ENCODE measurements at regions of chr2 and their contacts with region 1.

Region 1: DNA sequence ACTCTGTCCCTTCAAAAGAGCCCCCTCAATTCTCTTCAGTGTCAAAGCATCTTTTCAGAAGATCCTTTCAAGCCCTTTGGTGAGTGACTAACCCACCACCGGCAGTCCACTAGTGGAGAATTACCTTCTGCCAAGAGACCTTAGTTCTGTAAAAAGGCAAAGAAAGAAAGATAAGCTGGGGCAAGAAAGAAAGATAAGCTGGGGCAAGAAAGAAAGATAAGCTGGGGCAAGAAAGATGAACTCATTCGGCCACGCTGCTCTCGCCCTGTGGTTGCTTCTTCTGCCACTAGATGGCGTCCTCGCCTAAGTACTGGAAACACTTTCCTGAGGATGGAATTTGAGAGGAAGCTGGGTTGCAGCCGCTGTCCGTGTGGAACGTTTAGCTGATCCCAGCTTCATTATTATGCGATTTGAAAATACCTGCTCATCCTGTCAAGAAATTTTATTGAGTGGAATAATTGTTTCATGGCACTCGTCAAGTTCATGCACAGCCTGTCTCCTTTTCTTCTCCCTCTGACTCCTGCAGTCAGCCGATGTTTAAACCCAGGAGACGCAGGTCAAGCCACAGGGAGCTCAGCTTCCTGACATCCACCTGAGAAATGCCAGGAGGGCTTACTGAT is 17.3 kb upstream of the ANXA4 start:
- DNase-seq: peak; percentile 50 to 97
- H3K4me3 ChIP-seq: peak overlapping the region in 2 of 4 experiments; percentile 4 to 49; a peak in 3 of 8 replicates
- H3K27ac ChIP-seq: no peak overlapping the region
- H3K4me1 ChIP-seq: peaks cover 0 to 2% (median 0%) of the 10 kb centered on the region in 4 experiments; a peak in 1 of 7 replicates
- H3K27me3 ChIP-seq: no peaks in the 10 kb centered on the region
- CTCF ChIP-seq: peak; percentile 90 to 95 (median 91)
- EP300 ChIP-seq: no peak
- POLR2A ChIP-seq: no peak
- RAD21 ChIP-seq: peak; percentile 95 to 98

Region 2: GRCh38 chr2:69422198-69422597 is 302.5 kb before region 1 on chr2:
- CTCF ChIA-PET with region 1: no interaction called
- POLR2A ChIA-PET with region 1: no interaction called
- DNase-seq: no peak
- H3K4me3 ChIP-seq: no peak overlapping the region
- H3K27ac ChIP-seq: no peak overlapping the region
- H3K4me1 ChIP-seq: no peaks in the 10 kb centered on the region
- H3K27me3 ChIP-seq: no peaks in the 10 kb centered on the region
- CTCF ChIP-seq: no peak
- EP300 ChIP-seq: no peak
- POLR2A ChIP-seq: no peak
- RAD21 ChIP-seq: no peak

Region 3: GRCh38 chr2:69694894-69695849 is 29.5 kb before region 1 on chr2:
- CTCF ChIA-PET with region 1: interaction called, 15 read pairs
- POLR2A ChIA-PET with region 1: no interaction called
- DNase-seq: no peak
- H3K4me3 ChIP-seq: no peak overlapping the region
- H3K27ac ChIP-seq: no peak overlapping the region
- H3K4me1 ChIP-seq: peaks cover 0 to 3% (median 0%) of the 10 kb centered on the region in 4 experiments; a peak in 1 of 7 replicates
- H3K27me3 ChIP-seq: no peaks in the 10 kb centered on the region
- CTCF ChIP-seq: no peak
- EP300 ChIP-seq: no peak
- POLR2A ChIP-seq: no peak
- RAD21 ChIP-seq: no peak

Region 4: DNA sequence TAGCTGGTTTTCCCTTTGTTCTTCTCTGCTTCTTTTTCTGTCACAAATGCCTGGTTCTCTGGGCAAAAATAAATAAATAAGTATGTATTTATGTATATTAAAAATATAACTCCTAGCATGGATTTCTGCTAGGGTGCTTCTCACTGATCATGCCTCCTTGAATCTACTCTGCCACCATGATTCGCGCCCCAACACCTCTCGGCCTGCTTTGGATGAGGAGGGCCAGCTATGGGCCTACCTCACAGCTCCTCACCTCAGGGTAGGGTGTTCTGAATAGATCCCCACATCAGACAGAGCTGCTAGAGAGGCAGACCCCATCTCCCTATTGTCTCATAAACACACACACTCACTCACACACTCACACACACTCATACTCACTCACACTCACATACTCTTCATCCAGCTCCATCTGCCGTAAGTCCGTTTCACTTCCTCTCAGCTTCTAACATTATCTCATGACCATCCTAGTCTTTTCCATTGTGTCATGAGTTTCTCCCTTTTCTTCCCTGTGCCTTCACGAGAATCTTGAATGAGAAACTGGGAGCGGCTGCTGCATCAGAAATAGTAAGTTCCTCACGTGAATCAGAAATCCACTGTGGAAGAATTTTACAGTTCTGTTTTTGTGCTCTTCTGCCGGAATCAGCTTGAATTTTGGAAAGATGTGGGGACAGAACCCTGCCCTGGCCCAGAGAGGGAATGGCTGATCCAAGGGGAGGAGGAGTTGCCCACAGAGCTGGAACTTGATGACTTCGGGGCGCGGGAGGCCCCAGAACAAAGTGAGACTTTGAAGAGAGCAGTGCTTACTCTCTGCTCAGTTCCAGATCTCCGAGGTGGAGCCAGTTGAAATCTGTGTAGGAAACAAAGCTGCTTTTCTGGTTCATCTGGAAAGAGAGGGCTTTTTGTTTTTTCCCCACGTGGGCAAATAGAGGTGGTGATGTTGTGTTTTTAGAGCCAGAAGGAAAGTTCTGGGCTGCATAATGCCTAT is 38.2 kb after region 1 on chr2:
- CTCF ChIA-PET with region 1: interaction called, 11 read pairs
- POLR2A ChIA-PET with region 1: no interaction called
- DNase-seq: no peak
- H3K4me3 ChIP-seq: no peak overlapping the region
- H3K27ac ChIP-seq: no peak overlapping the region
- H3K4me1 ChIP-seq: no peaks in the 10 kb centered on the region
- H3K27me3 ChIP-seq: no peaks in the 10 kb centered on the region
- CTCF ChIP-seq: no peak
- EP300 ChIP-seq: no peak
- POLR2A ChIP-seq: no peak
- RAD21 ChIP-seq: no peak

Region 5: GRCh38 chr2:69789175-69789721 is 64.6 kb after region 1 on chr2:
- CTCF ChIA-PET with region 1: interaction called, 21 read pairs
- POLR2A ChIA-PET with region 1: no interaction called
- DNase-seq: peak in 1 of 2 experiments; percentile 13
- H3K4me3 ChIP-seq: no peak overlapping the region
- H3K27ac ChIP-seq: no peak overlapping the region
- H3K4me1 ChIP-seq: peaks cover 0 to 13% (median 5%) of the 10 kb centered on the region in 4 experiments; a peak in 3 of 7 replicates
- H3K27me3 ChIP-seq: no peaks in the 10 kb centered on the region
- CTCF ChIP-seq: no peak
- EP300 ChIP-seq: no peak
- POLR2A ChIP-seq: no peak
- RAD21 ChIP-seq: no peak

Region 6: GRCh38 chr2:69829256-69830046 is 104.8 kb after region 1 on chr2 and contains the start of gene GMCL1:
- CTCF ChIA-PET with region 1: interaction called, 13 read pairs
- POLR2A ChIA-PET with region 1: interaction called, 3 read pairs
- DNase-seq: peak; percentile 96 to 99
- H3K4me3 ChIP-seq: peak within 1 kb of the TSS; percentile 70 to 77 (median 72)
- H3K27ac ChIP-seq: peak within 1 kb of the TSS; percentile 89
- H3K4me1 ChIP-seq: peaks cover 0 to 5% (median 4%) of the 10 kb centered on the region in 4 experiments; a peak in 3 of 7 replicates
- H3K27me3 ChIP-seq: no peaks in the 10 kb centered on the region
- CTCF ChIP-seq: no peak
- EP300 ChIP-seq: no peak
- POLR2A ChIP-seq: peak; percentile 85 to 91
- RAD21 ChIP-seq: no peak
- total RNA-seq, gene GMCL1: 21.9 and 26.1 TPM in 2 replicates

Measured in H1 (cell line).